B cell (primary cell): ENCODE measurements at regions of chr2 and their contacts with region 1.

Region 1: DNA sequence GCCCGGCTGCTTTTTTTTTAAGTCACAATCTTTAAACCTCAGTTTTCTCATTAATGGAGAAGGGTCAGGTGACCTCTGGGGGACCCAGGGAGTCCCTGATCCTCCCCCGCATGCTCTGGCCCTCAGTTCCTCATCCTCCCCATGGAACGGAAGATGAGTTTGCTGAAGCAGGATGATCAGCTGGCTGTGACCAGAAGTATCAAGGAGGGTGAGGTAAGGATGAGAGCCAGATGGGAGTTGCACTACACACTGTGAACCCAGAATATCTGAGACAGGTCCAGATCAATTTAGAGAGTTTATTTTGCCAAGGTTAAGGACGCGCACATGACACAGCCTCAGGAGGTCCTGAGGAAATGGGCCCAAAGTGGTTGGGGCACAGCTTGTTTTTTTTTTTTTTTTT is 3.8 kb downstream of the CATIP start:
- DNase-seq: no peak
- ATAC-seq: no peak
- H3K4me3 ChIP-seq: no peak overlapping the region
- H3K4me3 Mint-ChIP-seq: no peak overlapping the region
- H3K27ac ChIP-seq: no peak overlapping the region
- H3K27ac Mint-ChIP-seq: no peak overlapping the region
- H3K4me1 ChIP-seq: peaks cover 0 to 7% of the 10 kb centered on the region in 2 donors
- H3K4me1 Mint-ChIP-seq: peaks cover 4% of the 10 kb centered on the region
- H3K27me3 ChIP-seq: no peaks in the 10 kb centered on the region
- H3K27me3 Mint-ChIP-seq: no peaks in the 10 kb centered on the region
- CTCF ChIP-seq: no peak

Region 2: GRCh38 chr2:218286570-218287459 is 73.6 kb before region 1 on chr2:
- CTCF ChIA-PET with region 1: interaction called, 30 read pairs
- POLR2A ChIA-PET with region 1: interaction called, 3 read pairs
- intact Hi-C with region 1: loop called (anchors 2 kb)
- DNase-seq: peak; percentile 94
- ATAC-seq: peak; percentile 56
- H3K4me3 ChIP-seq: peak overlapping the region; percentile 26 to 64 (median 54)
- H3K4me3 Mint-ChIP-seq: peak overlapping the region; percentile 86
- H3K27ac ChIP-seq: peak overlapping the region; percentile 97 to 99
- H3K27ac Mint-ChIP-seq: peak overlapping the region; percentile 96
- H3K4me1 ChIP-seq: peaks cover 79 to 98% of the 10 kb centered on the region in 2 donors
- H3K4me1 Mint-ChIP-seq: peaks cover 86% of the 10 kb centered on the region
- H3K27me3 ChIP-seq: no peaks in the 10 kb centered on the region
- H3K27me3 Mint-ChIP-seq: no peaks in the 10 kb centered on the region
- CTCF ChIP-seq: no peak

Region 3: GRCh38 chr2:218301176-218301819 is 59.1 kb before region 1 on chr2:
- CTCF ChIA-PET with region 1: interaction called, 84 read pairs
- POLR2A ChIA-PET with region 1: interaction called, 4 read pairs
- intact Hi-C with region 1: no loop called
- DNase-seq: peak; percentile 90
- ATAC-seq: peak; percentile 94
- H3K4me3 ChIP-seq: no peak overlapping the region
- H3K4me3 Mint-ChIP-seq: no peak overlapping the region
- H3K27ac ChIP-seq: no peak overlapping the region
- H3K27ac Mint-ChIP-seq: no peak overlapping the region
- H3K4me1 ChIP-seq: peaks cover 3 to 6% of the 10 kb centered on the region in 2 donors
- H3K4me1 Mint-ChIP-seq: peaks cover 7% of the 10 kb centered on the region
- H3K27me3 ChIP-seq: no peaks in the 10 kb centered on the region
- H3K27me3 Mint-ChIP-seq: no peaks in the 10 kb centered on the region
- CTCF ChIP-seq: peak; percentile 90

Region 4: GRCh38 chr2:218322895-218323808 is 37.3 kb before region 1 on chr2:
- CTCF ChIA-PET with region 1: interaction called, 5 read pairs
- POLR2A ChIA-PET with region 1: no interaction called
- intact Hi-C with region 1: loop called (anchors 2 kb)
- DNase-seq: peak; percentile 74
- ATAC-seq: peak; percentile 79
- H3K4me3 ChIP-seq: peak overlapping the region in 4 of 5 experiments; percentile 31 to 63 (median 58)
- H3K4me3 Mint-ChIP-seq: peak overlapping the region; percentile 85
- H3K27ac ChIP-seq: peak overlapping the region in 1 of 2 donors; percentile 38
- H3K27ac Mint-ChIP-seq: peak overlapping the region; percentile 41
- H3K4me1 ChIP-seq: peaks cover 34 to 40% of the 10 kb centered on the region in 2 donors
- H3K4me1 Mint-ChIP-seq: peaks cover 41% of the 10 kb centered on the region
- H3K27me3 ChIP-seq: peaks cover 0 to 11% (median 5%) of the 10 kb centered on the region in 4 experiments
- H3K27me3 Mint-ChIP-seq: no peaks in the 10 kb centered on the region
- CTCF ChIP-seq: no peak

Region 5: GRCh38 chr2:218645126-218645525 is 284.7 kb after region 1 on chr2:
- CTCF ChIA-PET with region 1: no interaction called
- POLR2A ChIA-PET with region 1: no interaction called
- intact Hi-C with region 1: no loop called
- DNase-seq: no peak
- ATAC-seq: no peak
- H3K4me3 ChIP-seq: no peak overlapping the region
- H3K4me3 Mint-ChIP-seq: no peak overlapping the region
- H3K27ac ChIP-seq: no peak overlapping the region
- H3K27ac Mint-ChIP-seq: no peak overlapping the region
- H3K4me1 ChIP-seq: peaks cover 3 to 5% of the 10 kb centered on the region in 2 donors
- H3K4me1 Mint-ChIP-seq: peaks cover 6% of the 10 kb centered on the region
- H3K27me3 ChIP-seq: no peaks in the 10 kb centered on the region
- H3K27me3 Mint-ChIP-seq: no peaks in the 10 kb centered on the region
- CTCF ChIP-seq: no peak

Region 6: DNA sequence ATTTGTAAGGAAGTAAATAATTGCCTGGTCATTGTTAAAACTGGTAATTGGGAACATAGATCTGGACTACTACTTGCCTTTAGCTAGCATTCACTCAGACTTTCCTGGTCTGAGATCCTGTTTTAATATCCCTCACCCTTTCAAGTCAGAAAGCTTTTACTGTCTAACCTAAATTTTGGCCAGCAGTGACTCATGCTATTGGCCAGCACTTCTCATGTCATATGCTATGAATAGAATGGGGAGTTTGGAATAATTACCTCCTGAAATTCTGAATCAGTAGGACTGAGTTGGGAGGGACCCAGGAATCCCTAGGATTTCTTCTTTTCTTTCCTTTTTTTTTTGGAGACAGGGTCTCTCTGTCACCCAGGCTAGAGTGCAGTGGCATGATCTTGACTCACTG is 330.8 kb after region 1 on chr2:
- CTCF ChIA-PET with region 1: no interaction called
- POLR2A ChIA-PET with region 1: no interaction called
- intact Hi-C with region 1: no loop called
- DNase-seq: no peak
- ATAC-seq: no peak
- H3K4me3 ChIP-seq: no peak overlapping the region
- H3K4me3 Mint-ChIP-seq: no peak overlapping the region
- H3K27ac ChIP-seq: no peak overlapping the region
- H3K27ac Mint-ChIP-seq: no peak overlapping the region
- H3K4me1 ChIP-seq: no peaks in the 10 kb centered on the region
- H3K4me1 Mint-ChIP-seq: no peaks in the 10 kb centered on the region
- H3K27me3 ChIP-seq: no peaks in the 10 kb centered on the region
- H3K27me3 Mint-ChIP-seq: no peaks in the 10 kb centered on the region
- CTCF ChIP-seq: no peak